GM12878 (cell line): ENCODE measurements at regions of chr4 and their contacts with region 1.

Region 1: GRCh38 chr4:184684491-184685189 is 35.1 kb downstream of the PRIMPOL start:
- DNase-seq: no peak
- ATAC-seq: 0 out of 3 replicates have a peak, but pooled peaks have one; percentile 19
- H3K4me3 ChIP-seq: no peak overlapping the region
- H3K27ac ChIP-seq: no peak overlapping the region
- H3K4me1 ChIP-seq: no peaks in the 10 kb centered on the region
- H3K27me3 ChIP-seq: no peaks in the 10 kb centered on the region
- CTCF ChIP-seq: no peak
- EP300 ChIP-seq: no peak
- POLR2A ChIP-seq: no peak
- RAD21 ChIP-seq: no peak

Region 2: DNA sequence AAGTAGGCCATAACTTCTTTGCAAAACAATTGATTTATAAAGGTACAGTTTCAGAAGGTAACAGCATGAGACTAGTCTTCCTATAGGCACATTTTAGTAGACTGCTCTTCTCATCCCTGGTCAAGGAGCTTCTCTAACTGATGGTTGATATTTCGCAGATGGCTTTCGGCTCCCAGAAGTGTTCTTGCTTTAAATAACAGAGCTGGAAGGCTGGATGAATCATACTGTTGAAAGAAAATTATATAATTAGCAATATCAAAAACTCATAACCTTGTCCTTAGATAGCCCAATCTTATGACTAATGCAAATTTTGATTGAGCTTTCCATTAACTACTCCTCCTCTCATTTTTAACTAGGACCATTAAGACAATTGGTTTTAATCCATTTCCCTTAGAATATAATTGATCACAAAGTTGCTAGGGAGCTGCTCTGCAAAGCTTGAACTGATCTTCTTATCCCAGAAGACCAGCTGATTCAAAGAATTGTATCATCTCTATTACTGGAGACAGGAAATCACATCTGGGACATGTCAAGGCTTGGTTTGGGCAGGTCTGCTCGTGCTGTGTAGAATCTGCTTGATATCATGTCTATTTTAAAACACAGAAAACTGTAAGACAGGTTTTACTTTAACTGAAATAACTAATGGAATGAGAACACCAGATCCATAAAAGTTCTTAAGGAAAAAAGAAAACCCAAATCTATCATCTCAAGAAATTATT is 10.7 kb after region 1 on chr4:
- CTCF ChIA-PET with region 1: interaction called, 4 read pairs
- POLR2A ChIA-PET with region 1: no interaction called
- RAD21 ChIA-PET with region 1: no interaction called
- SMC1A ChIA-PET with region 1: interaction called, 17 read pairs
- in situ Hi-C with region 1: no loop called
- intact Hi-C with region 1: no loop called
- DNase-seq: no peak
- ATAC-seq: no peak
- H3K4me3 ChIP-seq: no peak overlapping the region
- H3K27ac ChIP-seq: no peak overlapping the region
- H3K4me1 ChIP-seq: no peaks in the 10 kb centered on the region
- H3K27me3 ChIP-seq: no peaks in the 10 kb centered on the region
- CTCF ChIP-seq: no peak
- EP300 ChIP-seq: no peak
- POLR2A ChIP-seq: no peak
- RAD21 ChIP-seq: no peak